ENCODE measurements at regions of chr20 and their contacts with region 1.

Region 1: DNA sequence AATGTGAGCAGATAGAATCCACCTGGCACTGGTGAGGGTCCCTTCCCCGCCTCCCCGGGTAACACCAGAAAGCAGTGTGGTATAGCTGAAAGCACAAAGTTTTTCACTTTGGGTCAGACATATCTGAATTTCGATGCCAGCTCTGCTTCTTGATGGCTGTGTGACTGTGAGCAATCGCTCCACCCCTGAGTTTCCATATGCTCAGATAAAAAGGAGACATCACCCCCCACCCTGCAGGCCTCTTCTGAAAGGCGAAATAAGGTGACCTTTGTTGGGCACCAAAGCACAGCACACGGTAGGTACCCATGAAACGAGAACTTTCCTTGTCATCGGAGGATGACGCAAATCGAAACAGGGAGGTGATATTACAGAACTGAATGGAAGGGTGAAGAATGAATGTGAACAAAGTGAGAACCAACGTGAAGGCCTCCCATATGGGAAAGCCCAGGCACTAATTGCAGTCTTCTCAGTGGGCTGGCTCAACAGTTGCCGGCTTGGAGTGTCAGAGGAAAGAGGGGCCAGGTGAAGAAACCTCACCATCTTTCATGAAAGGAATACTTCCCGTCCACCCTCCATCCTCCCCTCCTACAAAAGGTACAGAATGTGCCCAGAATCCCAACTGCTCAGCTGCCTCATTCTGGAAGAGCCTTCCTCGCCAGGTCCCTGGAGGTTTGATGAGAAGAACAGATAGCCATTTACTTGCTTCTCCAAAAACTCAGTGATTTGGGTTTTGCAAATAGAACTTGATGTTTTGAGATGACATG is 61.8 kb downstream of the NFATC2 start:
- DNase-seq: peak; percentile 89
- H3K4me3 Mint-ChIP-seq: peak overlapping the region; percentile 61
- H3K27ac Mint-ChIP-seq: peak overlapping the region; percentile 97
- H3K4me1 Mint-ChIP-seq: peaks cover 88% of the 10 kb centered on the region
- H3K27me3 Mint-ChIP-seq: no peaks in the 10 kb centered on the region

Region 2: GRCh38 chr20:51385646-51386530 is 94.8 kb before region 1 on chr20:
- CTCF ChIA-PET with region 1: interaction called, 5 read pairs
- POLR2A ChIA-PET with region 1: interaction called, 4 read pairs
- intact Hi-C with region 1: loop called (anchors 1 kb)
- DNase-seq: peak; percentile 50
- H3K4me3 Mint-ChIP-seq: no peak overlapping the region
- H3K27ac Mint-ChIP-seq: no peak overlapping the region
- H3K4me1 Mint-ChIP-seq: peaks cover 73% of the 10 kb centered on the region
- H3K27me3 Mint-ChIP-seq: no peaks in the 10 kb centered on the region

Region 3: DNA sequence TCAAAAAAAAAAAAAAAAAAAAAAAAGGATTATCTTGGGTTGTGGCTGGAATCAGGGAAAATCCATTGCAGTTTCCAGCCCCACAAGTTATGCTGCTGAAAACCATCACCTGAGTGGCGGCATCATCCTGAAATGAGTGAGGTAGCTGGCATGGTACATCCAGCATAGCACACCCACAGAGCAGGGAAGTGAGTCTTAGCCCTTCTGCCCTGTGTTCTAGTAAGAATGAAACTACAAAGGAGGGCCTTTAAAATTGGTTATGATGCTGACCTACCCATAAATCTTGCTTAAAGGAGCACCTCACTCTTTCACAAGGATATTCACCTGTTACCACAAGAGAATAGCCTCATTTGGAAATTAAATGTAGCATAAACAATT is 57.4 kb before region 1 on chr20:
- CTCF ChIA-PET with region 1: interaction called, 10 read pairs
- POLR2A ChIA-PET with region 1: interaction called, 5 read pairs
- intact Hi-C with region 1: loop called (anchors 1 kb)
- DNase-seq: peak; percentile 78
- H3K4me3 Mint-ChIP-seq: peak overlapping the region; percentile 13
- H3K27ac Mint-ChIP-seq: peak overlapping the region; percentile 90
- H3K4me1 Mint-ChIP-seq: peaks cover 86% of the 10 kb centered on the region
- H3K27me3 Mint-ChIP-seq: no peaks in the 10 kb centered on the region

Region 4: GRCh38 chr20:51469578-51470498 is 10.9 kb before region 1 on chr20:
- CTCF ChIA-PET with region 1: interaction called, 12 read pairs
- POLR2A ChIA-PET with region 1: interaction called, 19 read pairs
- intact Hi-C with region 1: loop called (anchors 1 kb)
- DNase-seq: no peak
- H3K4me3 Mint-ChIP-seq: no peak overlapping the region
- H3K27ac Mint-ChIP-seq: peak overlapping the region; percentile 89
- H3K4me1 Mint-ChIP-seq: peaks cover 53% of the 10 kb centered on the region
- H3K27me3 Mint-ChIP-seq: no peaks in the 10 kb centered on the region

Region 5: GRCh38 chr20:51500311-51500710 is 19.6 kb after region 1 on chr20:
- CTCF ChIA-PET with region 1: interaction called, 38 read pairs
- POLR2A ChIA-PET with region 1: interaction called, 37 read pairs
- intact Hi-C with region 1: loop called (anchors 1 kb)
- DNase-seq: peak; percentile 68
- H3K4me3 Mint-ChIP-seq: no peak overlapping the region
- H3K27ac Mint-ChIP-seq: peak overlapping the region; percentile 94
- H3K4me1 Mint-ChIP-seq: peaks cover 73% of the 10 kb centered on the region
- H3K27me3 Mint-ChIP-seq: no peaks in the 10 kb centered on the region

Region 6: DNA sequence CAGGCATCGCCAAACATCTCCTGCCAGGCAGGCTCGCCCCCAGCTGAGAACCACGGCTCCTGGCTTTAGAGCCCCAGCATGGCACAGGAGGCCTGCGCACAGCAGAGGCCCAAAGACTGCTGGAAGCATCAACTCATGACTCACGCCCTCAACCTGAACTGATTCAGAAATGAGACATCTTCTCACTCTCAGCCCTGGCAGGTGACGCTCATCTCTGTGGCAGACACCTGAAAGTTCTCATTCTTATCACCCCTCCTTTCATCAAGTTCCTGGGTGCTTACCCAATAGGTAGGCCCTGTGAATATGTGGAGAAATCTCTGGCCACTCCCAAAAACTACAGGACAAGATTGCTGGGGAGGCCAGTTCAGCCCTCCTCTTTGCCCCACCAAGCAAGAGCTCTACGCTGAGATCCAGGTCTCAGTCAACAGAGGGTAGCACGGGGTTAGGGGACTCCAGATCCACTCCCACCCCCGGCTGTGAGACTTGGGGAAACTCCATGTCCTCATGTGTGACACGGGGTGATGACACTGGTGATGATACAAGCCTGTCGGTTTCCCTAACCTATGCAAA is 50.5 kb after region 1 on chr20:
- CTCF ChIA-PET with region 1: interaction called, 9 read pairs
- POLR2A ChIA-PET with region 1: interaction called, 15 read pairs
- intact Hi-C with region 1: loop called (anchors 1 kb)
- DNase-seq: peak; percentile 91
- H3K4me3 Mint-ChIP-seq: peak overlapping the region; percentile 84
- H3K27ac Mint-ChIP-seq: peak overlapping the region; percentile 94
- H3K4me1 Mint-ChIP-seq: peaks cover 94% of the 10 kb centered on the region
- H3K27me3 Mint-ChIP-seq: no peaks in the 10 kb centered on the region